Mammary epithelial cell (primary cell): ENCODE measurements at regions of chr22 and their contacts with region 1.

Region 1: GRCh38 chr22:27959335-27960090 is 40.5 kb upstream of the PITPNB start:
- DNase-seq: no peak
- H3K4me3 ChIP-seq: no peak overlapping the region
- H3K27ac ChIP-seq: no peak overlapping the region
- H3K4me1 ChIP-seq: no peaks in the 10 kb centered on the region
- H3K27me3 ChIP-seq: no peaks in the 10 kb centered on the region
- CTCF ChIP-seq: no peak

Region 2: GRCh38 chr22:27937453-27937852 is 22.1 kb before region 1 on chr22:
- CTCF ChIA-PET with region 1: interaction called, 14 read pairs
- dilution Hi-C with region 1: no loop called
- in situ Hi-C with region 1: no loop called
- intact Hi-C with region 1: no loop called
- DNase-seq: no peak
- H3K4me3 ChIP-seq: no peak overlapping the region
- H3K27ac ChIP-seq: no peak overlapping the region
- H3K4me1 ChIP-seq: no peaks in the 10 kb centered on the region
- H3K27me3 ChIP-seq: no peaks in the 10 kb centered on the region
- CTCF ChIP-seq: peak; percentile 14 to 39